Ovary (tissue), 10 donors: ENCODE measurements at regions of chr19 and their contacts with region 1.

Region 1: GRCh38 chr19:54882758-54883157 is 8.7 kb downstream of the FCAR start:
- DNase-seq: no peak
- H3K4me3 ChIP-seq: no peak overlapping the region
- H3K27ac ChIP-seq: no peak overlapping the region
- H3K4me1 ChIP-seq: no peaks in the 10 kb centered on the region
- H3K27me3 ChIP-seq: no peaks in the 10 kb centered on the region
- CTCF ChIP-seq: no peak
- EP300 ChIP-seq: no peak
- POLR2A ChIP-seq: no peak

Region 2: DNA sequence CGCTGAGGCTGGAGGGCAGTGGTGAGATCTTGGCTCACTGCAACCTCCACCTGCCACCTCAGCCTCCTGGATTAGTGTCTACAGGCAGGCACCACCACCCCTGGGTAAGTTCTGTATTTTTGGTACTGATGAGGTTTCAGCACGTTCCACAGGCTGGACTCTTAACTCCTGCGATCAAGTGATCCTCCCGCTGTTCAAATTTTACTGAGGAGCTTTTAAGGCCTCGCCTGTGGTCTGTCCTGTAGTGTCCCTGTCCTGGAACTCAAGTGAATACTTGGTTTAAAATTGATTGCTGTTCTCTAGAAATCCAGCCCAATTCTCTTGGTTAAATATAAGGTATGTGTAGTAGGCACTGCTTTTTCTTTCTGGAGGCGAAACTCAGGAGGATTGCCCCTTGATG is 1185.8 kb before region 1 on chr19:
- intact Hi-C with region 1: loop called in 1 of 4 experiments (anchors 10 kb)
- DNase-seq: no peak
- H3K4me3 ChIP-seq: no peak overlapping the region
- H3K27ac ChIP-seq: no peak overlapping the region
- H3K4me1 ChIP-seq: no peaks in the 10 kb centered on the region
- H3K27me3 ChIP-seq: no peaks in the 10 kb centered on the region
- CTCF ChIP-seq: no peak
- EP300 ChIP-seq: no peak
- POLR2A ChIP-seq: no peak

Region 3: DNA sequence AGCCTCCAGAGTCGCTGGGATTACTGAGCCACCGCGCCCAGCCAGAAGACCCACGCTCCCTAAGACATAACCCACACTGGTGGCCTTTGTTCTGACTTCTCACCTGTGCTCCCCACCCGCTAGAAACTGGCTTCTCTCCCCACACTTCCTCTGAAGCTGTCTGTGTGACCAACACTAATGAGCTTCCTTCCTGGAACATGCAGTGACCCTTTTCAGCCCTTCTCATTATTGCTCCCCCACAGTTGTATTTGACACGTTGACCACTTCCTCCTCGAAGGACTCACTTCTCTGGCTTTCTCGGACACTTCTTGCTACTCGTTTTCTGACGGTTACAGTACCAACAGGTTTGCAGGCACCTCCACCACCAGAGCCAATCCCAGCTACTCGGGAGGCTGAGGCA is 34.1 kb after region 1 on chr19:
- intact Hi-C with region 1: no loop called
- DNase-seq: no peak
- H3K4me3 ChIP-seq: no peak overlapping the region
- H3K27ac ChIP-seq: no peak overlapping the region
- H3K4me1 ChIP-seq: no peaks in the 10 kb centered on the region
- H3K27me3 ChIP-seq: no peaks in the 10 kb centered on the region
- CTCF ChIP-seq: no peak
- EP300 ChIP-seq: no peak
- POLR2A ChIP-seq: no peak